ENCODE measurements at regions of chr3 and their contacts with region 1.

Region 1: DNA sequence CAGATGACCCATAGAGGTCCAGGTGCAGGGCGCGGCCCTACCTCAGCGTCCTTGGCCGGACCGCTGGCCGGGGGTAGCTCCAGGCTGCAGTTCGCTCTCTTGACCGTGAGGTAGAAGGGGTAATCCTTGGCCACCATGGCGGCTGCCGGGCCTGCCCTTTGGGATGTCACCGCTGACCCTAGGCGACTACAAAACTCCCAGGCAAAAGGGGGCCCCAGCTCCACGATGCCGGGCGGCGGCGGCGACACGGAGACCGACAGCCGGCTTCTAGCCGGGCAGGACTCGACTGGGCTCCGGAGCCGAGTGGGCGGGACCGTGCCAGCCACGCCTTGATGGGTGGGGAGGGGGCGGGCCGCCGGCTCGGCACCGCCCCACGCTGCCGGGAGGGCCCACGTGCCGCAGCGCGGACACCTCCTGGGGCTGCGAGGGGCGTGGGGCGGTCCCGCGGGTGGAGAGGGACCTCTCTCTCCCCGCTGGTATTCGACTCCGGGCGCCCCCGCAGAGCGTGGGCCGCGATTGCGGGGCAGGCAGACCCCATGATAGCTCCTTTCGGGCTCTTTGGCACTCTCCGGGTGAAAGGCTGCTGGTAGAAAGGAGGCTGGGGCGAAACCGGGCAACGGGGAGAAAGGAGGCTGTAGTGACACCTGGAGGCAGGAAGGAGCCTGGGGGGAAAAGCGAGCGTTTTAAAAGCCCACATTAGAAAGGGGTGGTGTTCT is at the start of gene ARHGEF3:
- H3K4me3 ChIP-seq: peak within 1 kb of the TSS; percentile 70
- H3K27ac ChIP-seq: peak within 1 kb of the TSS; percentile 30; the same call in 1 of the 2 replicates
- H3K4me1 ChIP-seq: peaks cover 12% of the 10 kb centered on the region
- CTCF ChIP-seq: peak; percentile 61

Region 2: GRCh38 chr3:56694867-56695683 is 106.7 kb before region 1 on chr3:
- CTCF ChIA-PET with region 1: interaction called, 16 read pairs
- POLR2A ChIA-PET with region 1: interaction called, 3 read pairs
- H3K4me3 ChIP-seq: no peak overlapping the region
- H3K27ac ChIP-seq: no peak overlapping the region
- H3K4me1 ChIP-seq: no peaks in the 10 kb centered on the region
- CTCF ChIP-seq: no peak

Region 3: DNA sequence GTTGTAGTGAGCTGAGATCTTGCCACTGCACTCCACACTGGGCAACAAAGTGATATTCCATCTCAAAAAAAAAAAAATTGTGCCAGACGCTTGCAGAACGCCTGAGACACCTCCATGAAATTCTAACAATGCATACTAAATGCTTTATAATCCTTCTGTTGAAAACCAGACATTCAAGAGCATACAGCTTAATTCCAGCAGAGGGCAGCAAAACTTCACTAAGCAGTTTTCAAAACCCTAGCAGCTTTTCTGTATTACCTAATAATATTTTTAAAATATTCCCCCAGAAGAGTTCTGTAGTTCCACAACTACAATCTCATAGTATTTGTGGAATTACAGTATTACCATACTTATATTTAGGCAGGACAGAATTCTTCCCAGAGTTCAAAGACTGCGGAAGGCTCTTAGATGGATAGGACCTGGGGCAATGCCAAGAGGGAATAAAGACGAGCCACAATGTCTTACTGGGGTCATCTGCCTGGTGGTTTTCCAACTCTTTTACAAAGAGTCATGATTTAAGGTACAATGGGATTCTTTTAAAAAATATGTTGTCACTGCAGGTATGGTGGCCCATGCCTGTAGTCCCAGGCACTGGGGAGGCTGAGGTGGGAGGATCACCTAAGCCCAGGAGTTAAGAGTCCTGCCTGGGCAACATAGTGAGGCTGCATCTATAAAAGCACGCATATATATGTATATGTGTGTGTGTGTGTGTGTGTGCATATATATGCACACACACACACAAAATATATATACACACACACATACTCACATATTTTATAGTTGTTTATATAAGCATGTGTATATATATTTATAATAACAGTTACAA is 99.1 kb before region 1 on chr3:
- CTCF ChIA-PET with region 1: interaction called, 57 read pairs
- POLR2A ChIA-PET with region 1: interaction called, 3 read pairs
- H3K4me3 ChIP-seq: no peak overlapping the region
- H3K27ac ChIP-seq: no peak overlapping the region
- H3K4me1 ChIP-seq: no peaks in the 10 kb centered on the region
- CTCF ChIP-seq: no peak

Region 4: DNA sequence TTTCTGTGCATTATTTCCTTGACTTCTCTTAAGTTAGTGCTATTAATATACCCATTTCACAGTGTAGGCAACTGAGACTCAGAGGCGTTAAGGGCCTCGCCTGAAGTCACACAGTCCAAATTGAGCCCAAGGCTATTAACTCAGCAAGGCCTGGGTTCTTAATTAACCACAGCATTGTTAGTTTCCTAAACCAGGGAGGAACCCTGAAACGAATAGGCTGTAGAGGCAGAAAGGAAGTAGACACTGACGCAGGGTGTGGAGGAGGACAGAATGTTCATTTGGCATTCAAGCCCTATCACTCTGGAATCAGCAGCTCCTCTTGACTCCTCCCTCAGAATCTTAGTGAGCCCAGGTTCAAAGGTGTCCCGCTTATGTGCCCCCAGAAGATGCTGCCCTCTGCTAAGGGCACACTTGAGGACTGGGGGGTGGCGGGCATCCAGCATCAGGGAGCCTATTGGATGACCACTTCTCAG is 14.0 kb before region 1 on chr3:
- CTCF ChIA-PET with region 1: interaction called, 37 read pairs
- POLR2A ChIA-PET with region 1: interaction called, 3 read pairs
- H3K4me3 ChIP-seq: no peak overlapping the region
- H3K27ac ChIP-seq: no peak overlapping the region
- H3K4me1 ChIP-seq: peaks cover 15% of the 10 kb centered on the region
- CTCF ChIP-seq: no peak

Region 5: GRCh38 chr3:56812754-56813650 is 11.2 kb after region 1 on chr3:
- CTCF ChIA-PET with region 1: interaction called, 44 read pairs
- POLR2A ChIA-PET with region 1: interaction called, 4 read pairs
- H3K4me3 ChIP-seq: no peak overlapping the region
- H3K27ac ChIP-seq: no peak overlapping the region
- H3K4me1 ChIP-seq: peaks cover 30% of the 10 kb centered on the region
- CTCF ChIP-seq: no peak

Region 6: GRCh38 chr3:56988458-56989168 is 186.8 kb after region 1 on chr3:
- CTCF ChIA-PET with region 1: interaction called, 33 read pairs
- POLR2A ChIA-PET with region 1: no interaction called
- H3K4me3 ChIP-seq: no peak overlapping the region
- H3K27ac ChIP-seq: no peak overlapping the region
- H3K4me1 ChIP-seq: no peaks in the 10 kb centered on the region
- CTCF ChIP-seq: peak; percentile 75

Region 7: DNA sequence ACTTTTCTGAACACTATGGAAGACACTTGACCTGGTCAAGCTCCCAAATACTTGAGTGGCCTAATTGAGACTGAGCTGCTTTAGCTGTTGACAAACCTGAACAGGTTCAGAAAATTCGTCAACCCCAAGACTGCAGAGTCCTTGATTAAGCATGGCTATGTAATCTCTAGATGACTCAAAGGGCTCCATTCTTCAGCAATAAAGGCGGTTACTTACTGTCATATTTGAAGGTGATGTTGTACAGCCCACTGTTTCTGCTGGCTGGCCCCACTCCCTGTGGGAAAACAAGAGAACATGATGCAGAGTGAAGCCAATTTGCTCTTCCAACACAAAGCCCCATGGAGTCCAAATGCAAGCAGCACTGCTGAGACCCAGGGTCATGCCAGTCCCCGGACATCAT is 318.2 kb after region 1 on chr3:
- CTCF ChIA-PET with region 1: no interaction called
- POLR2A ChIA-PET with region 1: no interaction called
- H3K4me3 ChIP-seq: no peak overlapping the region
- H3K27ac ChIP-seq: no peak overlapping the region
- H3K4me1 ChIP-seq: no peaks in the 10 kb centered on the region
- CTCF ChIP-seq: no peak